K562 (cell line): ENCODE measurements at regions of chr6 and their contacts with region 1.

Region 1: GRCh38 chr6:188821-189655 is 103.2 kb upstream of the DUSP22 start:
- DNase-seq: peak; percentile 82 to 88 (median 86)
- ATAC-seq: peak; percentile 98
- H3K4me3 ChIP-seq: no peak overlapping the region
- H3K27ac ChIP-seq: no peak overlapping the region
- H3K4me1 ChIP-seq: peaks cover 0 to 10% of the 10 kb centered on the region in 2 experiments; a peak in 3 of 5 replicates
- H3K27me3 ChIP-seq: peaks cover 5 to 33% of the 10 kb centered on the region in 2 experiments; a peak in 4 of 5 replicates
- CTCF ChIP-seq: peak; percentile 95 to 97 (median 97)
- EP300 ChIP-seq: no peak
- POLR2A ChIP-seq: no peak
- RAD21 ChIP-seq: peak; percentile 92 to 93

Region 2: DNA sequence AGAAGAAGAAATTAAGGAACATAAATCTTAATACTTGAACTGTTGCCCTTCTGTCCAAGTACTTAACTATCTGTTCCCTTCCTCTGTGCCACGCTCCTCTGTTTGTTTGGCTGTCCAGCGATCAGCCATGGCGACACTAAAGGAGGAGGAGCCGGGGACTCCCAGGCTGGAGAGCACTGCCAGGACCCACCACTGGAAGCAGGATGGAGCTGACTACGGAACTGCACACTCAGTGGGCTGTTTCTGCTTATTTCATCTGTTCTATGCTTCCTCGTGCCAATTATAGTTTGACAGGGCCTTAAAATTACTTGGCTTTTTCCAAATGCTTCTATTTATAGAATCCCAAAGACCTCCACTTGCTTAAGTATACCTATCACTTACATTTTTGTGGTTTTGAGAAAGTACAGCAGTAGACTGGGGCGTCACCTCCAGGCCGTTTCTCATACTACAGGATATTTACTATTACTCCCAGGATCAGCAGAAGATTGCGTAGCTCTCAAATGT is 219.6 kb after region 1 on chr6:
- CTCF ChIA-PET with region 1: interaction called, 8 read pairs
- POLR2A ChIA-PET with region 1: no interaction called
- in situ Hi-C with region 1: no loop called
- intact Hi-C with region 1: loop called (anchors 2 kb)
- DNase-seq: peak; percentile 65 to 74 (median 70)
- ATAC-seq: peak; percentile 100
- H3K4me3 ChIP-seq: no peak overlapping the region
- H3K27ac ChIP-seq: no peak overlapping the region
- H3K4me1 ChIP-seq: peaks cover 0 to 2% of the 10 kb centered on the region in 2 experiments; a peak in 2 of 5 replicates
- H3K27me3 ChIP-seq: peaks cover 36 to 44% of the 10 kb centered on the region in 2 experiments
- CTCF ChIP-seq: peak; percentile 73 to 86 (median 82)
- EP300 ChIP-seq: no peak
- POLR2A ChIP-seq: no peak
- RAD21 ChIP-seq: peak; percentile 82 to 89

Region 3: GRCh38 chr6:551405-551804 is 362.4 kb after region 1 on chr6:
- CTCF ChIA-PET with region 1: no interaction called
- POLR2A ChIA-PET with region 1: no interaction called
- in situ Hi-C with region 1: no loop called
- intact Hi-C with region 1: loop called (anchors 2 kb)
- DNase-seq: peak in 2 of 4 experiments; percentile 58 to 60
- ATAC-seq: peak; percentile 97
- H3K4me3 ChIP-seq: no peak overlapping the region
- H3K27ac ChIP-seq: no peak overlapping the region
- H3K4me1 ChIP-seq: no peaks in the 10 kb centered on the region; a peak in 1 of 5 replicates
- H3K27me3 ChIP-seq: no peaks in the 10 kb centered on the region
- CTCF ChIP-seq: peak; percentile 45 to 68 (median 56)
- EP300 ChIP-seq: no peak
- POLR2A ChIP-seq: no peak
- RAD21 ChIP-seq: peak; percentile 6 to 61; a peak in 2 of 4 replicates

Region 4: DNA sequence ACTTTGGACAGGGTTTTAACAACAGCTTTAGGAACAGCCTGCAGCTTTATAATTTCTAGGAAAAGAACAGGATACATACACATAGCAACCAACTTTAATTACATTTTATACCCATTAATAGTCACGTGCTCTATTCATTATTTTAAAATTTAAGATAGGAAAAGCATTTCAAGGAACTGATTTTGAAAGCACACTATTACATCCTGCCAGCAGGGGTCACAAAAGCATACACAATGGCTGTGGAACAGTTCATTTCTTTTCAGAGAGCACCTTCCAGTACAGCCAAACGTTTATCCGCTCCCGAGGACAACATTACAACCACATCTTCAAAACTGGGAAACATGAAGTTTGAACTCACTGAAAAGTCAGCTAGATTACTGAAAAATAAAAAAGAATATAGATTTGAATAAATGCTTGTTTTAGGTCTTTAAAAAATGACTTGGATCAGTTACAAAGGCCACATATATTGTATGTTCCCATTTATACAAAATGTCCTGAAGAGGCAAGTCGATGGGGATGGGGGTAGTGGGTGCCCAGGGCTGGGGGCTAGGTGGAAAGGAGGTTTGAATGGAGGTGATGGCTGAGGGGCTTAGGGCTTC is 608.5 kb after region 1 on chr6:
- CTCF ChIA-PET with region 1: no interaction called
- POLR2A ChIA-PET with region 1: no interaction called
- in situ Hi-C with region 1: no loop called
- intact Hi-C with region 1: loop called (anchors 5 kb)
- DNase-seq: peak; percentile 33 to 66 (median 48)
- ATAC-seq: peak; percentile 86
- H3K4me3 ChIP-seq: no peak overlapping the region
- H3K27ac ChIP-seq: no peak overlapping the region
- H3K4me1 ChIP-seq: no peaks in the 10 kb centered on the region
- H3K27me3 ChIP-seq: peaks cover 20 to 43% of the 10 kb centered on the region in 2 experiments
- CTCF ChIP-seq: peak; percentile 55 to 80 (median 69); a peak in 5 of 6 replicates
- EP300 ChIP-seq: no peak
- POLR2A ChIP-seq: no peak
- RAD21 ChIP-seq: peak; percentile 90 to 91

Region 5: GRCh38 chr6:1436334-1437306 is 1247.6 kb after region 1 on chr6:
- CTCF ChIA-PET with region 1: no interaction called
- POLR2A ChIA-PET with region 1: no interaction called
- in situ Hi-C with region 1: no loop called
- intact Hi-C with region 1: loop called (anchors 1 kb)
- DNase-seq: peak; percentile 73 to 79 (median 76)
- ATAC-seq: peak; percentile 99
- H3K4me3 ChIP-seq: no peak overlapping the region
- H3K27ac ChIP-seq: no peak overlapping the region
- H3K4me1 ChIP-seq: no peaks in the 10 kb centered on the region
- H3K27me3 ChIP-seq: peaks cover 2 to 14% of the 10 kb centered on the region in 2 experiments; a peak in 2 of 5 replicates
- CTCF ChIP-seq: peak; percentile 78 to 97 (median 97)
- EP300 ChIP-seq: no peak
- POLR2A ChIP-seq: no peak
- RAD21 ChIP-seq: peak; percentile 77 to 85

Region 6: DNA sequence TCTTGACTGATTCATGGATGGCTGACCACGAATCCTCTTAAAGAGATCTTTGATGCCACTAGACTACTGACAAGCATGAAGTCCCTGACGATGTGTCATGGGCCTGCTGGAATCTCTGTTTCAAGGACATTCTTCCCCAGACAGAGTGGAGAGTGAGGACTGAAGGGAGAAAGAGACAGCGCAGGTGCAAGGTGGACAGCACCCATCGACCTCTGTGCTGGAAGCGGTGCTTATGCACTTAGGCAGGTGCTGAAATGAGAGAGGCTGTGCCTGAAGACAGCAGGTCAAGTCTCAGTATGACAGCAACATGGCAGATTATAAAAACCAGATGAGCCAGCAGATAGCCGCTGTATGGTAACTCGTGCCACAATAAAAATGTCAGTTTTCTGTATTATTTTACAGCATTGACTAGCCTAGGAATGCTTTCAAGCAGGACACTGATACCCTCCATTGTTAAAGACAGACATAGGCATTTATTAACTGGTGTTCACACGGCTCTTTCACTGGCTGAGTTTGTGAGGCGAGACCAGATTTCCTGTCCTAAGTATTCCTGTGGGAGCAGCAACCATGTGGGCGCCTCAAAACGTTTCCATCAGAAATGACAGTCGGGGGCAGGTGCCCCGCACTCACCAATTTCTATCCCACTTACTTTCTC is 1468.2 kb after region 1 on chr6:
- CTCF ChIA-PET with region 1: no interaction called
- POLR2A ChIA-PET with region 1: no interaction called
- in situ Hi-C with region 1: no loop called
- intact Hi-C with region 1: no loop called
- DNase-seq: no peak
- ATAC-seq: no peak
- H3K4me3 ChIP-seq: no peak overlapping the region
- H3K27ac ChIP-seq: no peak overlapping the region
- H3K4me1 ChIP-seq: no peaks in the 10 kb centered on the region
- H3K27me3 ChIP-seq: peaks cover 22 to 60% of the 10 kb centered on the region in 2 experiments
- CTCF ChIP-seq: no peak
- EP300 ChIP-seq: no peak
- POLR2A ChIP-seq: no peak
- RAD21 ChIP-seq: no peak